Heart left ventricle (tissue), 16 donors: ENCODE measurements at regions of chr2 and their contacts with region 1.

Region 1: DNA sequence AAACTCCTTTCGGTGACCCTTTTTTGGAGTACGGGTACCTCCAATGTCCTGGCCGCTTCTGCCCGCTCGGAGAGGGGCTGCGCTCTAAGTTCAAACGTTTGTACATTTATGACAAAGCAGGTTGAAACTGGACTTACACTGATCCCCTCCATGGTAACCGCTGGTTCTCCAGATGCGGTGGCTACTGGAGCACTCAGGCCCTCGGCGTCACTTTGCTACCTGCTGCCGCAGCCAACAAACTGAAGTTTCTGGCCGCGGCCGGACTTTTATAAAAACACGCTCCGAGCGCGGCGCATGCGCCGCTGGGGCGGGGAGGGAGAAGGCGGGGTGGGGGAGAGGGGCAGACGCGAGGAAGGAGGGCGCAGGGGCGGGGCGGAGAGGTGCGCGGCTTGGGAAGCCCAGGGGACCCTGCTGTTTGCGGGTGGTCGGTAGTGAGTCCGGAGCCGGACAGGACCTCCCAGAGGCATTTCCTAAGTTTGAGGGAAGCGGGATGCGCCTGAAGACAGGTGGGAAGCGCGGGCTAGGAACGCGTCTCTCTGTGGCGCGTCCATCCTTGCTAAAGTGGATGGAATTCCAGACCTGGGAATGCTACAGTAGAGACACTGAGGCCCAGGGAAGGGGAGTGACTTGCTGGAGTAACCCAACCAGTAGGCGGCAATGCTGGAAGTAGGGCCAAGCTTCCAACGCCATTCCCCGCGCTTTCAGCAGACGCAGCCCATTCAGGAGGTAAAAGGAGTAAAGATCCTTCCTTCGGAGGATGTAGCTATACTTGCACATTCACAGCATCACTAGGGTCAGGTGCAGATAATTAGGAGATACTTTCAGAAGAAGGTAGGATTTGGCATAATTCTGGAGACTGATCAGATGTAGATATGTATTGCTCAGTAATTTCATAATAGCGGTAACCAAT is at the start of gene CXCR4:
- DNase-seq: peak; percentile 70 to 91 (median 73)
- ATAC-seq: peak in 3 of 4 donors; percentile 34 to 73 (median 61)
- H3K4me3 ChIP-seq: peak within 1 kb of the TSS; percentile 33 to 82 (median 60)
- H3K27ac ChIP-seq: peak within 1 kb of the TSS in 10 of 12 donors; percentile 1 to 91 (median 57)
- H3K4me1 ChIP-seq: peaks cover 0 to 61% (median 19%) of the 10 kb centered on the region in 12 donors
- H3K27me3 ChIP-seq: peaks cover 0 to 46% (median 26%) of the 10 kb centered on the region in 9 donors
- CTCF ChIP-seq: peak in 2 of 12 donors; percentile 25 to 35
- POLR2A ChIP-seq: peak in 1 of 2 donors; percentile 44
- total RNA-seq, gene CXCR4: 1.2 to 21.3 (median 3.7) TPM

Region 2: GRCh38 chr2:135925571-135925970 is 192.6 kb before region 1 on chr2:
- intact Hi-C with region 1: loop called in 2 of 10 experiments (anchors 5 to 10 kb)
- DNase-seq: no peak
- ATAC-seq: no peak
- H3K4me3 ChIP-seq: no peak overlapping the region
- H3K27ac ChIP-seq: no peak overlapping the region
- H3K4me1 ChIP-seq: no peaks in the 10 kb centered on the region
- H3K27me3 ChIP-seq: no peaks in the 10 kb centered on the region
- CTCF ChIP-seq: no peak
- POLR2A ChIP-seq: no peak

Region 3: GRCh38 chr2:136013955-136014354 is 104.2 kb before region 1 on chr2:
- intact Hi-C with region 1: loop called in 4 of 10 experiments (anchors 2 to 10 kb)
- DNase-seq: peak in 2 of 5 donors; percentile 36
- ATAC-seq: peak; percentile 51 to 94 (median 70)
- H3K4me3 ChIP-seq: no peak overlapping the region
- H3K27ac ChIP-seq: peak overlapping the region in 9 of 12 donors; percentile 29 to 69 (median 56)
- H3K4me1 ChIP-seq: peaks cover 7 to 51% (median 17%) of the 10 kb centered on the region in 12 donors
- H3K27me3 ChIP-seq: no peaks in the 10 kb centered on the region
- CTCF ChIP-seq: peak in 3 of 12 donors; percentile 15 to 44 (median 21)
- POLR2A ChIP-seq: no peak

Region 4: DNA sequence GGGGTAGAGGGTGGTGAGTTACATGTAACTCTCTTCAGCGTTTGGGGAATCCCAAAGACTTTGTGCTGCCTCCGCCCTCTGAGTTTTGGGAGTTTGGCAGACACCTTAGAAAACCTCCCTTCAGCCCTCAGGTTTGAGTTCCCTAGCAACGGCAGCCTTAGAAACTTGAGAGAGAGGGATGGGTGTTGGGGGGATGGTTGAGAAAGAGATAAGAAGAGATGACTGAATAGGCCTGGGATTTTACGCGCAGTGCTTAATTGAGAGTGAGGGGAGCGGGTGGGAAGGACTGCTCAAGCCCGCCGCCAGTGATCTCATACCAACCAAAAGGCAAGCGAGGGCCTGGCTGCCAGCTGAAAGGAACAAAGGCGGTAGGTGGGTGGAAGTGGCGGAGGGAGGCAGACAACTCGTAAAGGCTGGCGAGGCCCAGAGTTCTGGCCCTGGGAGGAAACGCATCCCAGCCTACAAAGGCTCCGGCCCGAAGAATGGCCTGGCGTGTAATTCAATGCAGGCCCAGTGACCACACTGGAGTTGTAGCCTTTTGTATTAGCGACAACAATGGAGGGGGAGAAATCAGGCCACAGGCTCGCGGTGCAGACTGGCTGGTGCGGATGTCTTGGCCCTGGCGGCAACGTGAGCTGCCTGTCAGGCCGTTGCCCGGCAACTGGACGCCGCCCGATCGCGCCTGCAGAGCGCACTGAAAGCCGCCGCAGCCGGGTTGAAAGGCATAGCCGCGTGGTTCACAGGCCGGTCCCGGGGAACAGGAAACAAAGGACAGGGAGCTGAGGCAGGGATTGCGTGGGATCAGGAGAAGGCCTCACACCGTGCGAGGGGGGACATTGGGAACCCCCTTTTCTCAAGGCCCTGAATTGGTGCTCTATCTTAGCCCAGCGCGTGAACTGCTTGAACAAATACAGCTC is 92.8 kb before region 1 on chr2:
- intact Hi-C with region 1: loop called in 1 of 10 experiments (anchors 5 kb)
- DNase-seq: peak; percentile 82 to 86 (median 84)
- ATAC-seq: peak; percentile 93 to 99 (median 98)
- H3K4me3 ChIP-seq: peak overlapping the region in 7 of 12 donors; percentile 0 to 34 (median 18)
- H3K27ac ChIP-seq: peak overlapping the region in 7 of 12 donors; percentile 17 to 63 (median 31)
- H3K4me1 ChIP-seq: peaks cover 0 to 20% (median 2%) of the 10 kb centered on the region in 12 donors
- H3K27me3 ChIP-seq: no peaks in the 10 kb centered on the region
- CTCF ChIP-seq: no peak
- POLR2A ChIP-seq: no peak

Region 5: GRCh38 chr2:136384531-136385303 is 266.6 kb after region 1 on chr2:
- intact Hi-C with region 1: loop called in 3 of 10 experiments (anchors 5 to 10 kb)
- DNase-seq: no peak
- ATAC-seq: peak; percentile 60 to 88 (median 78)
- H3K4me3 ChIP-seq: no peak overlapping the region
- H3K27ac ChIP-seq: no peak overlapping the region
- H3K4me1 ChIP-seq: peaks cover 0 to 13% (median 0%) of the 10 kb centered on the region in 12 donors
- H3K27me3 ChIP-seq: no peaks in the 10 kb centered on the region
- CTCF ChIP-seq: peak; percentile 28 to 67 (median 50)
- POLR2A ChIP-seq: no peak